ENCODE measurements at regions of chr2 and their contacts with region 1.

Region 1: DNA sequence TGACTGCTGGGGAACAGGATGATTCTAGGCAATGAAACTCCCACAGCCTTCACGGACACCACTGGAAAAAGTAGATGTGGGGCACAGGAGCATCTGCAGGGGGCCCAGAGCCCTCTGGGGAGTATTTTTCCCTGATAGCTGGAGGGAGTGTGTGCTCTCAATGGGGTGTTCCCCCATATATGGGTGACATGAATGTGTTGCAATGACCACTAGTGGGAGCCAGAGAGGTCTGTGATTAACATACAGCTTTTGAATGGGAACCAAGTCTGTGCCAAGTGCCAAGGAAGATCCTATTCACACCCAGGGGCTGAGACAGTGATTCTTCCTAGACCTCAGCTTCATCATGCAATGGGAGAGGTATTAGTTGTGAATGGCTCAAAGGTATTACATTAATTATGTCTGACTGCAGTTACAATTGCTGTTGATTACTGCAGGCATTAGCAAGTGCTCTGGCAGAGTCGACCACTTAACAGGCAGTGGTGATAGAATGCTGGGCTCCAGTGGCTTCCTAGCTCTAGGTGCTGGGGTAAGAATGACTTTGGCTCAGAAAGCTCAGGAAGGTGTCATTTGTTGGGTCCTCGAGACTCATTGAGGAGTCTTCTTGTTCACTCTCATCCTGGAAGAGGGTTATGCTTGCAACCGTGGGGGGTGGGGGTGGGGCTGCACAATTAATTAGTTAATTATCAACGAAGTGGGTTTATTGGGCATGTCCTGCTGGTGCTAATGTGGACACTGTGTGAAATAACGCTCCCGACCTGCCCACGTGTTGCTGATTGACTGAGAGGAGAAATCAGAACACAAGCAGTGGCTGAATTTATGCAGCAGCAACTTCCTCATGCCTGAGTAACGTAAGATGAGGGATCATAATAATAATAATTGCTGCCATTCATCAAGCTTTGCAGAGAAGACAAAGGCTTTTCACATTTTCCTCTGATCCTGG is 194.1 kb downstream of the CLIP4 start:
- DNase-seq: peak; percentile 75 to 80
- ATAC-seq: peak; percentile 78 to 95
- H3K4me3 ChIP-seq: no peak overlapping the region
- H3K27ac ChIP-seq: no peak overlapping the region
- H3K4me1 ChIP-seq: 0 out of 3 replicates have a peak, but pooled peaks cover 3% of the 10 kb centered on the region
- CTCF ChIP-seq: peak; percentile 87
- EP300 ChIP-seq: no peak
- POLR2A ChIP-seq: no peak
- RAD21 ChIP-seq: peak; percentile 62 to 65

Region 2: DNA sequence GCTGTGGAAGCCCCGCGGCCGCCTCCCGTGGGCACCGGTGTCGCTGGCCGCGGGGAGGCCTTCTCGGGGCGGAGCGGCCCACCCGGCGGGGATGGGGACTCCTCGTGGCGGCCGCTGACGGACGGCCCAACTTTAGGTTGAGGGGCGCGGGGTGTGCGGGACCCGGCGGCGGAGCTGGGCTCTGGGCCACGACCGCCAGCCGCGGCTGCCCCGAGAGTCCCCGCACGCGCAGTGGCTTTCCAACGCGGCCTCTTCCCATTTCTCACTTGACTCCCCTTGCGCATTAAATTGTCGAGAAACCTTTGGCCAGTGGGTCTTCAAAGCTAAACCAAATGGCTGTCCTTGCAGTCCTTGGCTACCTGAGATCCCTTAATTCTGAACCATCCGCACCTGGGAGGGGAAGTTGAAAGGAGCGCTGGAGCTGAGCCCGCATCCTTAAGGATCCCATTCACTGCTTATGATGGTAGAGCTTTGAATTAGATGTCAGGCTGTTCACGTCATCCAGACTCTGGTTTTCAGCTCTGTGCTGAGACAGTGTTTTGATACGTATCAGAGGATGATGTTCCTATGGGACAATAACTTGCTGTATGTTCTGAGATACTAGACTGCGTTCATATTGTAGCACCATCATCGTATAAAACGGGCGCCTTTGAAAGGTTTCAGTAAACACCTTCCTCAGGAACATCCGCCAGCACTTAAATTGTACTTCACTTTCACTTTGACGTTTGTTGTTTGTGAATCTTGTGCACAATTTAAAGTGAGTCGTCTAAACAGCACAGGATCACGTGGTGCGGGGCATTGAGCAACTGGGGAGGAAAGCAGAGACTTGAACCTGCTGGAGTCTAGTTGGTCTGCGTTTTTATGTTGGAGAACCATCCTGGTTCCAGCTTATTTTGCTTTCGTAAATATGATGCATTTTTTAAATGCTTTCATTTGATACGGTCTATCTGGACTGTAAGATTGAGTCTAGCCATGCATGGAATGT is 193.3 kb before region 1 on chr2:
- CTCF ChIA-PET with region 1: no interaction called
- POLR2A ChIA-PET with region 1: no interaction called
- DNase-seq: peak; percentile 60 to 82
- ATAC-seq: peak; percentile 57 to 65
- H3K4me3 ChIP-seq: peak overlapping the region; percentile 79
- H3K27ac ChIP-seq: peak overlapping the region; percentile 98 to 99
- H3K4me1 ChIP-seq: peaks cover 74% of the 10 kb centered on the region
- CTCF ChIP-seq: no peak
- EP300 ChIP-seq: no peak
- POLR2A ChIP-seq: peak; percentile 38
- RAD21 ChIP-seq: no peak; a peak in 1 of 5 replicates

Region 3: GRCh38 chr2:29281086-29281915 is 28.1 kb before region 1 on chr2:
- CTCF ChIA-PET with region 1: interaction called, 38 read pairs
- POLR2A ChIA-PET with region 1: no interaction called
- DNase-seq: peak; percentile 27 to 53
- ATAC-seq: peak; percentile 45 to 82
- H3K4me3 ChIP-seq: no peak overlapping the region
- H3K27ac ChIP-seq: no peak overlapping the region
- H3K4me1 ChIP-seq: peaks cover 7% of the 10 kb centered on the region; the same call in 2 of the 3 replicates
- CTCF ChIP-seq: no peak
- EP300 ChIP-seq: no peak
- POLR2A ChIP-seq: no peak
- RAD21 ChIP-seq: no peak

Region 4: GRCh38 chr2:29295857-29296256 is 13.5 kb before region 1 on chr2:
- CTCF ChIA-PET with region 1: interaction called, 25 read pairs
- POLR2A ChIA-PET with region 1: no interaction called
- DNase-seq: peak; percentile 25 to 42
- ATAC-seq: peak; percentile 69 to 81; a peak in 5 of 6 replicates
- H3K4me3 ChIP-seq: no peak overlapping the region
- H3K27ac ChIP-seq: no peak overlapping the region
- H3K4me1 ChIP-seq: no peaks in the 10 kb centered on the region
- CTCF ChIP-seq: peak; percentile 25; the same call in 1 of the 3 replicates
- EP300 ChIP-seq: no peak
- POLR2A ChIP-seq: no peak
- RAD21 ChIP-seq: peak; percentile 46 to 61

Region 5: GRCh38 chr2:29336391-29337241 is 27.3 kb after region 1 on chr2:
- CTCF ChIA-PET with region 1: interaction called, 17 read pairs
- POLR2A ChIA-PET with region 1: no interaction called
- DNase-seq: no peak
- ATAC-seq: no peak
- H3K4me3 ChIP-seq: no peak overlapping the region
- H3K27ac ChIP-seq: no peak overlapping the region
- H3K4me1 ChIP-seq: no peaks in the 10 kb centered on the region
- CTCF ChIP-seq: no peak
- EP300 ChIP-seq: no peak
- POLR2A ChIP-seq: no peak
- RAD21 ChIP-seq: no peak

Region 6: DNA sequence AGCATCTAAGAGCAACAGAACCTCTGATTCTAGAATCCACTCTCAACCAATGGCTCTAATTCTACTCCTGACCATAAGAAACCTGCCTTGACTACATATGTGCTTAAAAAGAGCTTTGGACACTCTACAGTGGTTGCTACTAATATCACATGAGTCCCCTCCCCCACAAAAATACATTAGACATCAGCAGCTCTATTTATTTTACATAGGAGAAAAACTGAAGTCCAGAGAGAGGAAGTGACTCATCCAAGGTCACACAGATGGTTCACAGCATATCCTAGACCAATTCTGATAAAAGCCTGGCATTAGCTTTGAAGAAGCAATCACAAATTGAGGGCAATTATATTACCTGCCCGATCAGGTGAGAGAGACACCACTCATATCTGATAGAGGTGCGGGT is 562.2 kb after region 1 on chr2:
- CTCF ChIA-PET with region 1: interaction called, 10 read pairs
- POLR2A ChIA-PET with region 1: no interaction called
- DNase-seq: no peak
- ATAC-seq: no peak
- H3K4me3 ChIP-seq: no peak overlapping the region
- H3K27ac ChIP-seq: no peak overlapping the region
- H3K4me1 ChIP-seq: no peaks in the 10 kb centered on the region
- CTCF ChIP-seq: no peak
- EP300 ChIP-seq: no peak
- POLR2A ChIP-seq: no peak
- RAD21 ChIP-seq: no peak

Region 7: DNA sequence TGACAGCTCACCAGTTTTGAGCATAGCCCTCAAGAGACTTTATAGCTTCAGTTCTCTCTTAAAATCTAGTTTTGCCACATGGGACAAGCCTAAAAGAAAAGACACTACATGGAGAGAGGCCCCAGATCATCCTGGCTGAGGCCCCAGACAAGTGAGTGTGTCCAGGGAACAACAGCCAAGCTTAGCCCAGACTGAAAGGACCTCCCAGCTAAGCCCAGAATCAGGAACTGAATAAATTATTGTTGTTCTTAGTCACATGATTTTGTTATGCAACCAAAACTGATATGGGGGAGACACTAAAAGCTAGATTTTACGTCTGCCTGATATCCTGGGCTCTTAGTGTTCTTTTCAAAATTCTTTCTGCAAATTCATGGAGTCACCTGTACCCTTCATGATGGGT is 892.6 kb after region 1 on chr2:
- CTCF ChIA-PET with region 1: no interaction called
- POLR2A ChIA-PET with region 1: no interaction called
- DNase-seq: no peak
- ATAC-seq: no peak
- H3K4me3 ChIP-seq: no peak overlapping the region
- H3K27ac ChIP-seq: no peak overlapping the region
- H3K4me1 ChIP-seq: no peaks in the 10 kb centered on the region
- CTCF ChIP-seq: no peak
- EP300 ChIP-seq: no peak
- POLR2A ChIP-seq: no peak
- RAD21 ChIP-seq: no peak

Measured in A549 (cell line).